Esophagus muscularis mucosa (tissue), 4 donors: ENCODE measurements at regions of chr6 and their contacts with region 1.

Region 1: GRCh38 chr6:35624341-35625070 is 64.2 kb downstream of the FKBP5 start:
- DNase-seq: no peak
- H3K4me3 ChIP-seq: no peak overlapping the region
- H3K27ac ChIP-seq: peak overlapping the region in 3 of 4 donors; percentile 5 to 35 (median 10)
- H3K4me1 ChIP-seq: peaks cover 0 to 66% (median 26%) of the 10 kb centered on the region in 4 donors
- H3K27me3 ChIP-seq: no peaks in the 10 kb centered on the region
- CTCF ChIP-seq: peak in 1 of 3 experiments; percentile 19
- EP300 ChIP-seq: no peak
- POLR2A ChIP-seq: no peak

Region 2: GRCh38 chr6:35385457-35386202 is 238.9 kb before region 1 on chr6:
- intact Hi-C with region 1: no loop called
- DNase-seq: no peak
- H3K4me3 ChIP-seq: no peak overlapping the region
- H3K27ac ChIP-seq: no peak overlapping the region
- H3K4me1 ChIP-seq: peaks cover 4 to 34% (median 23%) of the 10 kb centered on the region in 4 donors
- H3K27me3 ChIP-seq: no peaks in the 10 kb centered on the region
- CTCF ChIP-seq: no peak
- EP300 ChIP-seq: no peak
- POLR2A ChIP-seq: no peak

Region 3: GRCh38 chr6:35669451-35670045 is 45.0 kb after region 1 on chr6:
- intact Hi-C with region 1: loop called (anchors 10 kb)
- DNase-seq: no peak
- H3K4me3 ChIP-seq: peak overlapping the region in 1 of 4 donors; percentile 0
- H3K27ac ChIP-seq: no peak overlapping the region
- H3K4me1 ChIP-seq: peaks cover 45 to 99% (median 86%) of the 10 kb centered on the region in 4 donors
- H3K27me3 ChIP-seq: no peaks in the 10 kb centered on the region
- CTCF ChIP-seq: no peak
- EP300 ChIP-seq: no peak
- POLR2A ChIP-seq: no peak